ENCODE measurements at regions of chr15 and their contacts with region 1.

Region 1: DNA sequence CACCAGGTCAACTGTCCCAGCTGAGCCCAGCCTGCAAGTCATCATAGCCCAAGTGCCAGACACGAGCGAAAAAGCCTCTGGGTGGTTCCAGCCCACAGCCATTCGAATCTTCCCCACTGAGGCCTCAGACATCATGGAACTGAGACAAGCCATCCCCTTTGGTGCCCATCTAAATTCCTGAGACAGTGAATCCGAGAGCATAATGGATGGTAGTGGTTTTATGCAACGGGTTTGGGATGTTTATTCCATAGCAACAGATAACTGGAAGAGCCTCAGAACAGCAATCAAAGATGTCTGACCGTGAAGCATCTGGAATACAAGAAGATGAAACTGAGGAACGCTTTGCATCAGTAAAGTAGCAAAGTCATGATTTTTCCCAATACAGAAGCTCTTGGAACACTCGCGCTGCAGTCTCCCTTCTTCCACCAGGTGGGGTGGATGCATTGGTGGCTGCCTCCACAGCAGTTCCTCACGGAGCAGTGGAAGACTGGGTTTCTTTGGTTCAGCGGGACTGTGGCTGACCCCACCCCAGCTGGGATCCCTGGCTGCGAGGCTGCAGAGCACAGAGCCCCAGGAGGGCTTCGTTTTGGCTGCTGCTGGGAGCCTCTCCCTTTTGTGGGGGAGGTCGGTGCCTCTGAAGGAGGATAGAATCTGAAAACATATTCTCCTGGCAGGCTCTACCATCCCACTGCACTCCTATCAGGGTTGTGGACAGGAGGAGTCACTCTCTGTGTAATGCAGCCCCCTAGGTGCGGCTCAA is 26.4 kb upstream of the PDE8A start:
- DNase-seq: peak; percentile 57
- CTCF ChIP-seq: peak; percentile 64

Region 2: DNA sequence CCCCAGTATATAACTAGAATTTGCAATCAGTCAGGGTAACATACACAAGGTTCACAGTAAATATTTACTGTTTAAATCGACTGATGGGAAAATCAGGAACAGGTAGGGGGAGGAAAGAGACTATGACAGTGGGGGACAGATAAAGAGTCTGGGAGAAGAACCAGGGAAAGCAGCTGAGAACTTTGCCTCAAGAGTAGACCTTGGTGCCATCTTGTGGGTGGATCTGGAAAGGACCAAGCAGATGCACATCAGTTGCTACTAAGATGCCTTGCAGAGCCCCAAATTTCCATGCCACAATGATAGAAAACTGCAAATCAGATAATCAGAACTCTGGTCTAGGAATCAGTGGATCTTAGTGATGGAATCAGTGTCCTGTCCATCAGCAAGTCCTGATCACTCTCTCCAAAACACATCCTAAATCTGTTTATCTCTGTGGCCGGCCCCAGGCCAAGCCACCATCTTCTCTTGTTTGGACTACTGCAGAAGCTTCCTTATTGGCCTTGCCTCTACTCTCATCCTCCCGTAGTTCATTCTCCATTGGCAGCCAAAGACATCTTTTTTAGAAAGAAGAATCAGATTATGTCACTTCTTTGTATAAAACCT is 89.1 kb after region 1 on chr15:
- in situ Hi-C with region 1: loop called (anchors 10 kb)
- DNase-seq: peak; percentile 38
- CTCF ChIP-seq: peak; percentile 71

Region 3: DNA sequence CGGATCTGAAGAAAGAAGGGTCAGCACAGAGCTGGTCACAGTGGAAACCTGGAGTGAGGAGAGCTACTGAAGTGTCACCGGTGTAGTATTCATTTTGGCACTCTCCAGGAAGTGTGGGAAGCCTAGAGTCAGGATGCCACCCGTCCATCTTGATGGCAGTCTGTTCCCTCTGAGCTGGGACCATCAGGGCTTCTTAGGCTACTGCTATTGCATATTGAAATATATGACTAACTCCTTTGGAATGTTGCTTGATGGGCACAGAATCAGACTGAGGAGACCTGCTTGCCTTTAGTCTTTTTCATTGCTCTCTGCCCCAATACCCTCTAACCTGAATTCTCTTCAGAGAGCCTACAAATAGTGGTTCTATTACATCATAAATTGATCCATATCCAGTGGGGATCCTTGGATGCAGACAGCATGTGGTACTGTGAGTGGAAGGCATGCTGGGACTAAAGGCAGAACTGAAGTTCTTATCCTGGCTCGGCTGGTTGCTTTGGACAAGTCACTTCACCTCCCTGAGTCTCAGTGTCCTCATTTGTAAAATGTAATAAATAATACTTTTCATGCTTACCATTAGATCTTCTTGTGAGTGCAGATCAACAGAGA is 169.9 kb after region 1 on chr15:
- in situ Hi-C with region 1: loop called (anchors 25 kb)
- DNase-seq: no peak
- CTCF ChIP-seq: no peak

Measured in GM13976 (cell line).